Gastrocnemius medialis (tissue), 4 donors: ENCODE measurements at regions of chr18 and their contacts with region 1.

Region 1: GRCh38 chr18:47150029-47150823 is at the start of gene HDHD2:
- DNase-seq: peak; percentile 67 to 75
- ATAC-seq: peak; percentile 92 to 94
- H3K4me3 ChIP-seq: peak within 1 kb of the TSS; percentile 81 to 98 (median 82)
- H3K27ac ChIP-seq: peak within 1 kb of the TSS; percentile 83 to 96 (median 95)
- H3K4me1 ChIP-seq: peaks cover 25 to 33% of the 10 kb centered on the region in 2 donors
- H3K27me3 ChIP-seq: no peaks in the 10 kb centered on the region
- CTCF ChIP-seq: no peak
- POLR2A ChIP-seq: peak; percentile 62 to 74
- total RNA-seq, gene HDHD2: 5.4 to 21.8 (median 11.9) TPM

Region 2: GRCh38 chr18:47050468-47050867 is 99.8 kb before region 1 on chr18:
- in situ Hi-C with region 1: no loop called
- intact Hi-C with region 1: no loop called
- DNase-seq: no peak
- ATAC-seq: no peak
- H3K4me3 ChIP-seq: no peak overlapping the region
- H3K27ac ChIP-seq: no peak overlapping the region
- H3K4me1 ChIP-seq: peaks cover 0 to 11% of the 10 kb centered on the region in 2 donors
- H3K27me3 ChIP-seq: no peaks in the 10 kb centered on the region
- CTCF ChIP-seq: peak; percentile 21 to 62 (median 54)
- POLR2A ChIP-seq: no peak

Region 3: GRCh38 chr18:47166294-47166693 is 16.1 kb after region 1 on chr18:
- in situ Hi-C with region 1: no loop called
- intact Hi-C with region 1: loop called (anchors 2 kb)
- DNase-seq: no peak
- ATAC-seq: no peak
- H3K4me3 ChIP-seq: no peak overlapping the region
- H3K27ac ChIP-seq: peak overlapping the region in 1 of 4 donors; percentile 62
- H3K4me1 ChIP-seq: peaks cover 3 to 8% of the 10 kb centered on the region in 2 donors
- H3K27me3 ChIP-seq: no peaks in the 10 kb centered on the region
- CTCF ChIP-seq: no peak
- POLR2A ChIP-seq: no peak

Region 4: GRCh38 chr18:47175908-47176575 is 25.8 kb after region 1 on chr18 and contains the start of gene IER3IP1:
- in situ Hi-C with region 1: no loop called
- intact Hi-C with region 1: loop called (anchors 1 kb)
- DNase-seq: peak; percentile 81 to 83
- ATAC-seq: peak; percentile 89 to 95
- H3K4me3 ChIP-seq: peak within 1 kb of the TSS; percentile 87 to 99 (median 96)
- H3K27ac ChIP-seq: peak within 1 kb of the TSS; percentile 81 to 93 (median 88)
- H3K4me1 ChIP-seq: peaks cover 13 to 29% of the 10 kb centered on the region in 2 donors
- H3K27me3 ChIP-seq: no peaks in the 10 kb centered on the region
- CTCF ChIP-seq: peak in 3 of 5 experiments; percentile 10 to 42 (median 33)
- POLR2A ChIP-seq: peak; percentile 51 to 53
- total RNA-seq, gene IER3IP1: 13.0 to 17.0 (median 14.3) TPM

Region 5: DNA sequence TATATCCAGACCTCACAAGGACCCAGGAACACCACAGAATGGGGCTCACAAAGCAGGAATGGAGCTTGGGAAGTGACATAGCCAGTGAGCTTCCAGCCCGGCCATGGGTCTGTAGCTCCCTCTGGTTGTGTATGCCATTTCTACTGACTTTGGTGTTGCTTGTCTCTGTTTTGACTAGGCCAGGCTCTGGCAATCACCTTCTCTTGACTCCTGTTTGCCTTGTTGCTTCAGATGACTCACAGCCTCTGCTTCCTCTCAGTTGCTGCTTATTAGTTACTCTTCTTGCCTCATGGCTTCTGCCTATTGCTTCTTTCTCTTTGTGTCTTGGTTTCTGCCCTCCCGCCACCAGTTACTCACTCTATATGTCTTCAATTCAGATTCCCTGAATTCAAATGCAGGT is 41.7 kb after region 1 on chr18:
- in situ Hi-C with region 1: no loop called
- intact Hi-C with region 1: no loop called
- DNase-seq: no peak
- ATAC-seq: no peak
- H3K4me3 ChIP-seq: no peak overlapping the region
- H3K27ac ChIP-seq: no peak overlapping the region
- H3K4me1 ChIP-seq: no peaks in the 10 kb centered on the region
- H3K27me3 ChIP-seq: peaks cover 0 to 6% (median 0%) of the 10 kb centered on the region in 3 donors
- CTCF ChIP-seq: no peak
- POLR2A ChIP-seq: no peak